GM10248 (cell line): ENCODE measurements at regions of chr12 and their contacts with region 1.

Region 1: DNA sequence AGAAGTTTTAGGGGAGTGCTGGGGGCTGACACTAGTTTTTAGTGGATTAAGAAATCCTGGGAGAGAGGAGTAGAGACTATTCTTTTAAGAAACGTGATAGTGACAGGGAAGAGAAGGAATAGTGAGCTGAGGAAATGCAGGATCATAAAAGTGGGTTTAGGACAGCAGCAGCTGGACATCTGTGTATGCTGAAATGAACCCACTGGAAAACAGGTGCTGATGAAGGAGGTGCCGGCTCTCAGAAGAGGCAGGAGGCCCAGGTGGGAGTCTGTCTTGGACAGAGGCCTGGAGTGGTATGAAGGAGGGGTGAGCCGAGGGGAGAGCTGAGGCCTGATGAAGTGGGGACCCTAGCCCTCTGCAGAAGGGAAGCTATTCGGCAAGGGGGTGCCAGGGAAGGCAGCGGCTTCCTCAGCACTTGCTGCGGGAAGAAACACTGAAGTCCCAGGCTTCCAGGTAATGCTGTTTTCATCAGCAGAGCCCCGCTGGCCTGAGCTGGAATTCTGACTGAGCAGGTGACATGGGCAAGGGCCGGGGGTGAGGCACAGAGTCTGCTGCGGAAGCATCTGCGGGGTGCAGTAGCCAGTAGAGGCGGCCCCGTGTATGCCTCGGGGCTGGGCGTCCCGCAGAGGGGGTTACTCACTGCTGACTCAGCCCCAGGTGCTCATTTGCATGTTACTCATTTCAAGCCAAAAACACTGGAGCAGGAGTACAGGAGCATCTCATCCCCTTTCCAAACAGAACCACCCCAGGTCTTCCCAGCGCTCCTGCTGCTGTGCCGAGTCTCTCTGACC is 89.7 kb downstream of the TMCC3 start:
- DNase-seq: peak; percentile 72
- CTCF ChIP-seq: no peak

Region 2: GRCh38 chr12:94548085-94548484 is 12.5 kb before region 1 on chr12:
- CTCF ChIA-PET with region 1: interaction called, 10 read pairs
- POLR2A ChIA-PET with region 1: no interaction called
- DNase-seq: no peak
- CTCF ChIP-seq: no peak